K562 (cell line): ENCODE measurements at regions of chr16 and their contacts with region 1.

Region 1: GRCh38 chr16:11851294-11852091 is at the start of gene RSL1D1:
- DNase-seq: peak; percentile 96 to 99 (median 98)
- ATAC-seq: peak; percentile 89
- H3K4me3 ChIP-seq: peak within 1 kb of the TSS; percentile 76
- H3K27ac ChIP-seq: peak within 1 kb of the TSS; percentile 91
- H3K4me1 ChIP-seq: peaks cover 8 to 25% of the 10 kb centered on the region in 2 experiments; a peak in 4 of 5 replicates
- H3K27me3 ChIP-seq: no peaks in the 10 kb centered on the region
- CTCF ChIP-seq: no peak
- EP300 ChIP-seq: no peak
- POLR2A ChIP-seq: peak; percentile 98
- RAD21 ChIP-seq: no peak
- polyA plus RNA-seq, gene RSL1D1: 373 to 662 TPM

Region 2: GRCh38 chr16:11833951-11834695 is 17.4 kb before region 1 on chr16:
- CTCF ChIA-PET with region 1: no interaction called
- POLR2A ChIA-PET with region 1: interaction called, 31 read pairs
- in situ Hi-C with region 1: no loop called
- intact Hi-C with region 1: no loop called
- DNase-seq: no peak
- ATAC-seq: no peak
- H3K4me3 ChIP-seq: no peak overlapping the region
- H3K27ac ChIP-seq: no peak overlapping the region
- H3K4me1 ChIP-seq: peaks cover 0 to 6% of the 10 kb centered on the region in 2 experiments; a peak in 3 of 5 replicates
- H3K27me3 ChIP-seq: no peaks in the 10 kb centered on the region
- CTCF ChIP-seq: no peak
- EP300 ChIP-seq: no peak
- POLR2A ChIP-seq: no peak
- RAD21 ChIP-seq: no peak

Region 3: DNA sequence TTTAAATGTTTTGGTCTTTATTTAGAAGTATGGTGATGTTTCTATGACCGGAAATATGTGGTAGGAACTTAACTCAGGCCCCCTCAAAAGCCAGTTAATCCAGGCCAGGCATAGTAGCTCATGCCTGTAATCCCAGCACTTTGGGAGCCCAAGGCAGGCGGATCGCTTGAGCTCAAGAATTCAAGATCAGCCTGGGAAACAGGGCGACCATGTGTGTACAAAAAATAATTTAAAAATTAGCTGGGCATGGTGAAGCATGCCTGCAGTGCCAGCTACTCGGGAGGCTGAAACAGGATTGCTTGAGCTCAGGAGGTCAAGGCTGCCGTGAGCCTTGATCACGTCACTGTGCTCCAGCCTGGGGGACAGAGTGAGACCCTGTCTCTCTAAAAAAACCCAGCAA is 10.5 kb before region 1 on chr16:
- CTCF ChIA-PET with region 1: no interaction called
- POLR2A ChIA-PET with region 1: interaction called, 31 read pairs
- in situ Hi-C with region 1: no loop called
- intact Hi-C with region 1: no loop called
- DNase-seq: no peak
- ATAC-seq: no peak
- H3K4me3 ChIP-seq: no peak overlapping the region
- H3K27ac ChIP-seq: no peak overlapping the region
- H3K4me1 ChIP-seq: peaks cover 0 to 2% of the 10 kb centered on the region in 2 experiments; a peak in 2 of 5 replicates
- H3K27me3 ChIP-seq: no peaks in the 10 kb centered on the region
- CTCF ChIP-seq: no peak
- EP300 ChIP-seq: no peak
- POLR2A ChIP-seq: no peak
- RAD21 ChIP-seq: no peak